ACHN (cell line): ENCODE measurements at regions of chr2 and their contacts with region 1.

Region 1: GRCh38 chr2:173027181-173028128 is 48.2 kb upstream of the MAP3K20 start:
- DNase-seq: peak; percentile 87

Region 2: GRCh38 chr2:172578054-172578453 is 449.4 kb before region 1 on chr2:
- in situ Hi-C with region 1: no loop called
- DNase-seq: no peak

Region 3: GRCh38 chr2:173210270-173211196 is 183.1 kb after region 1 on chr2:
- in situ Hi-C with region 1: loop called (anchors 25 kb)
- DNase-seq: peak; percentile 80